ENCODE measurements at regions of chr17 and their contacts with region 1.

Region 1: DNA sequence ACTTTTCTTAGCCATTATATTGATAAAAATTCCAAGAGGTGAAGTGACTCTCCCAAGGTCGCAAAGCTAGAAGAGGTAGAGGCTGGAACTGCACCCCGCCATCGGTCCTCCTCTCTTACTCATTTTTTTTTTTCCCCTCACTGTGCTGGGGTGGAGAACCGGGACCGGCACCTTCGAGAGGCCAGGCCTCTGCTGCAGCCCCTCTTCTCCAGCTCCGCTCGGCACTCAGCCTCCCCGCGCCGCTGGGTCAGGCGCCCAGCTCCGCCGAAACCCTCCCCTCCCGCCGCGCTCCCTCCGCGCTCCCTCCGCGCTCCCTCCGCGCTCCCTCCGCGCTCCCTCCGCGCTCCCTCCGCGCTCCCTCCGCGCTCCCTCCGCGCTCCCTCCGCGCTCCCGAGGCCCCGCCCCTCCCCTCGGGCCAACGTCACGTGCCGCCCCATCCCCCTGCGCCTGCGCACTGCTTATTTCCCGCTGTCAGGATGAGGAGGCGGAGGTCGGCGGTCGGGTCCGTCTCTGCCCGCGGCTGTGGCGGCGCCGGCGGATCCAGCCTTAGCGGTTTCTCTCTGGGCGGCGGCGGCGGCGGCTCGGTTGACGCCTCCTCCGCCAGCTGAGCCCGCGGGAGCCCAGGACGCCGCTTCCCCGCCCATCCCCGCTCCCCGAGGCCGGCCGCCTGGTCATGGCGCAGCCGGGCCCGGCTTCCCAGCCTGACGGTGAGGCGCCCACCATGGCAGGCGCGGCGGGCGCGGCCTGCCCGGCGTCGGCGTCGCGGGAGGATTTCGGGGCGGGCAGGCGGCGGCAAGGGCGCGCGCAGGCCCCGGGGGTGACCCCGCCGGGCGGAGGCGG is at the start of gene RABEP1:
- DNase-seq: peak; percentile 86
- H3K4me3 ChIP-seq: peak within 1 kb of the TSS; percentile 78 to 86 (median 80)
- H3K27ac ChIP-seq: peak within 1 kb of the TSS; percentile 69
- H3K4me1 ChIP-seq: peaks cover 25% of the 10 kb centered on the region
- H3K27me3 ChIP-seq: peaks cover 0 to 2% of the 10 kb centered on the region in 2 experiments
- CTCF ChIP-seq: no peak
- POLR2A ChIP-seq: peak; percentile 82
- total RNA-seq, gene RABEP1: 54.8 and 55.3 TPM in 2 replicates

Region 2: DNA sequence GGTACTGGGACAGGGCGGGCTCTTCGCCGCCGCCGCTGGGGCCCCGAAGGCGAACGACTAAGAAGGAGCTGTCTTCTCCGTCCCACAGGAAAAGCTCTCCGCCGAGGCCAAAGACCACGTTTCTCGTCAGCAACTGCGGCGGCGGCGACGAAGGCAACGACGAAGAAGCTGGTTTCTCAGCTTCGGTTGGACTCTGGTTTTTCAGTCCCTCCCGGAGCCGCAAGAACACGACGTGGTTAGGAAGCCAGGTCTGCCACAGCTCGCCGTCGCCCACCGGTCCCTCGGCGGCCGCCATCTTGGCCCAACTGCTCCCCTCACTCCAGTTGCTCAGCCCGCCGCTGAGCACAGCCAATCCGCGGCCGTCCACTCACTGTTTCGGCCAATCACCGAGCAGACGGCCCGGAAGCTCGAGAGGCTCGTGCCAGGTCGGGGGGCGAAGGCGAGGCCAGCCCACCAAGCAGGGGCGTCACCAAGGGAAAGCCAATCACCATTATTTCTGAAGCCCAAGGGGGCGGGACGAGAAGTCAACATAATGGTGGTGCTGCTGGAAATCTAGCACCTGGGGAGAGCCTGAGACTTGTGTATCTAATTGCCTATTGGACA is 137.4 kb after region 1 on chr17 and contains the start of gene NUP88:
- CTCF ChIA-PET with region 1: no interaction called
- POLR2A ChIA-PET with region 1: no interaction called
- dilution Hi-C with region 1: no loop called
- intact Hi-C with region 1: loop called (anchors 5 kb)
- DNase-seq: peak; percentile 99
- H3K4me3 ChIP-seq: peak within 1 kb of the TSS; percentile 75 to 94 (median 89)
- H3K27ac ChIP-seq: peak within 1 kb of the TSS; percentile 79
- H3K4me1 ChIP-seq: peaks cover 13% of the 10 kb centered on the region
- H3K27me3 ChIP-seq: no peaks in the 10 kb centered on the region
- CTCF ChIP-seq: no peak
- POLR2A ChIP-seq: peak; percentile 49
- total RNA-seq, gene NUP88: 87.4 and 95.8 TPM in 2 replicates

Measured in endothelial cell of umbilical vein (primary cell).